ENCODE measurements at regions of chr19 and their contacts with region 1.

Region 1: GRCh38 chr19:56321989-56322440 is 7.4 kb upstream of the ZSCAN5A start:
- DNase-seq: no peak
- ATAC-seq: no peak
- H3K4me3 ChIP-seq: no peak overlapping the region
- H3K4me3 Mint-ChIP-seq: no peak overlapping the region
- H3K27ac ChIP-seq: no peak overlapping the region
- H3K27ac Mint-ChIP-seq: no peak overlapping the region
- H3K4me1 ChIP-seq: no peaks in the 10 kb centered on the region
- H3K4me1 Mint-ChIP-seq: no peaks in the 10 kb centered on the region
- H3K27me3 ChIP-seq: peaks cover 0 to 2% of the 10 kb centered on the region in 2 experiments
- H3K27me3 Mint-ChIP-seq: peaks cover 14 to 15% of the 10 kb centered on the region in 2 donors

Region 2: GRCh38 chr19:56105090-56105701 is 216.8 kb before region 1 on chr19:
- CTCF ChIA-PET with region 1: no interaction called
- POLR2A ChIA-PET with region 1: no interaction called
- DNase-seq: peak in 33 of 35 experiments; percentile 21 to 70 (median 47)
- ATAC-seq: peak; percentile 64 to 82 (median 68)
- H3K4me3 ChIP-seq: no peak overlapping the region
- H3K4me3 Mint-ChIP-seq: peak overlapping the region in 2 of 3 donors; percentile 4 to 65
- H3K27ac ChIP-seq: no peak overlapping the region
- H3K27ac Mint-ChIP-seq: no peak overlapping the region
- H3K4me1 ChIP-seq: peaks cover 4 to 39% of the 10 kb centered on the region in 2 experiments
- H3K4me1 Mint-ChIP-seq: peaks cover 37 to 43% (median 38%) of the 10 kb centered on the region in 3 donors
- H3K27me3 ChIP-seq: no peaks in the 10 kb centered on the region
- H3K27me3 Mint-ChIP-seq: no peaks in the 10 kb centered on the region

Region 3: GRCh38 chr19:56594783-56595547 is 272.9 kb after region 1 on chr19 and contains the start of gene ZNF71:
- CTCF ChIA-PET with region 1: no interaction called
- POLR2A ChIA-PET with region 1: interaction called in 1 of 2 experiments, 15 read pairs
- DNase-seq: peak; percentile 70 to 87 (median 79)
- ATAC-seq: peak; percentile 95 to 96 (median 95)
- H3K4me3 ChIP-seq: peak within 1 kb of the TSS; percentile 73 to 91
- H3K4me3 Mint-ChIP-seq: peak within 1 kb of the TSS; percentile 80 to 93 (median 91)
- H3K27ac ChIP-seq: peak within 1 kb of the TSS; percentile 33
- H3K27ac Mint-ChIP-seq: peak within 1 kb of the TSS; percentile 75 to 87
- H3K4me1 ChIP-seq: peaks cover 6 to 19% of the 10 kb centered on the region in 2 experiments
- H3K4me1 Mint-ChIP-seq: peaks cover 20 to 25% (median 23%) of the 10 kb centered on the region in 3 donors
- H3K27me3 ChIP-seq: peaks cover 0 to 4% of the 10 kb centered on the region in 2 experiments
- H3K27me3 Mint-ChIP-seq: no peaks in the 10 kb centered on the region
- total RNA-seq, gene ZNF71: 5.1 to 10.4 (median 9.3) TPM